Endothelial cell of umbilical vein (primary cell): ENCODE measurements at regions of chr17 and their contacts with region 1.

Region 1: GRCh38 chr17:8057691-8058114 is 18.8 kb downstream of the ALOX15B start:
- DNase-seq: peak; percentile 76
- H3K4me3 ChIP-seq: no peak overlapping the region
- H3K27ac ChIP-seq: no peak overlapping the region
- H3K4me1 ChIP-seq: peaks cover 16% of the 10 kb centered on the region
- H3K27me3 ChIP-seq: peaks cover 28 to 38% of the 10 kb centered on the region in 2 experiments
- CTCF ChIP-seq: peak; percentile 63 to 70
- POLR2A ChIP-seq: no peak

Region 2: DNA sequence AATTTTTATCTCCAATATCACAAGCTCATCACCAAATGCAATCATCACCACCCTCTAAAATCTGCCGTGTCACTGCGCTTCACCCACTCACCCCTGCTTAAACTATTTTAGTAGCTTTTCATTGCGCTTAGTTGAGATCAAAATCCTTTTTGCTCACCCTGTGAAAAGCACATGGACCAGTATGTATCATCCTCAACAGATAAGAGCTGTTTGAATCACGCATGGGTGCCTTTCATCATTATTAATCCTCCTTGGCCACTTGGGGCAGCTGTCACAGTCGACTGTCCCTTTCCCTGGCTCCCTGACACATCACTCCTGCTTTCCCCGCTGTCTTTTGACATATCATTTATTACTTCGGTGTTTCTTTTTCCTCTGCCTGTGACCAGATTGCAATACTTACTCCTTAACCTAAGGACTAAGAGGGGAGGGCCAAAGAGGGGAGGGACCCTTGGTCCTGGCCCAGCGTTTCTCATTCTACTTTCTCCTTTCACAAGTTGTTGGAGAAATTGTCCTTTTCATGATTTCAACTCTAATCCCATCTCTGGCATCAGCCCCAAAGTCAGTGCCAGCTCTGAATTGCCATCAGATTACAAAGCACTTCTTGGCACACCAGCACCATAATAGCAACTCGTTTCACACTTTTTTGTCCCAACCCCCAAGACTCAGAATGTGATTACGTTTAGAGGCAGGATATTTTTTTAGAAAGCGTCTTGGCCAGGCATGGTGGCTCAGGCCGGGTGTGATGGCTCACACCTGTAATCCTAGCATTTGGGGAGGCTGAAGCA is 232.3 kb before region 1 on chr17:
- CTCF ChIA-PET with region 1: interaction called, 5 read pairs
- POLR2A ChIA-PET with region 1: no interaction called
- dilution Hi-C with region 1: no loop called
- intact Hi-C with region 1: loop called (anchors 5 kb)
- DNase-seq: no peak
- H3K4me3 ChIP-seq: no peak overlapping the region
- H3K27ac ChIP-seq: no peak overlapping the region
- H3K4me1 ChIP-seq: no peaks in the 10 kb centered on the region
- H3K27me3 ChIP-seq: peaks cover 0 to 6% of the 10 kb centered on the region in 2 experiments
- CTCF ChIP-seq: peak in 1 of 2 donors; percentile 4
- POLR2A ChIP-seq: no peak

Region 3: DNA sequence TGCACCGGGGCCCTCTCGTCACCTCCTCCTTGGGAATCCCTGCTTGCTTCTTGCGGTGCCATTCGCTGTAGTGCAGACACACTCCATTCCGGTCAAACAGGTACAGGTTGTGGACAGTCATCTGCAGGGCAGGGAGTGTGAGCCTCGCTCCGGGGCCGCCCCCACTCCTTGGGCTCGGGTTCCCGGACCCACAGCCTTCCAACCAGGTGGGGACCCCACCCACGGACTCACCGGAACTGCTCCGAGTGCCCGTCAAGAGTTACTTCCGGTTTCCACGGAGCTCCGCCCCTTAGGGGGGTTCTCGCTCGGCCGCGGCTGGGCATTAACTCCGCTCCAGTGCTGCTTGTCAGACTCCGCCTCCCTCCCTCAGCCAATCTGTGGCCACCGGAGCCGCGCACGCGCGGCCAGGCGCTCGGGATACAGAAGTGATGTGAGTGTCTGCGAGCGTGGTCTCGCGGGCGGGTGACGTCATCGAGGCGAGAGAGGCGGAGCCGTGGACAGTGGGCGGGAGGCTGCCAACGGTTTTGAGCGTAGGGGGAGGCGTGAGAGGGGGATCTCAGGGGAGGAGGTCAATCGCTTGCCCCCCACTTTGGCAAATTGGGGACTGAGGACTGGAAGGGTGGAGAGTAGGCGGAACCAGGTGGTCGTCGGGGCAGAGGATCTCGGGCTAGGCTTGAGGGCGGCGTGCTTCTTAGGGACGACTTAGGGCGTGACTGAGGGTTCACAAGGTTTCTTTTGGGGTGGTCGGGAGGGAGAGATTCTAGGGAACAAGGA is 125.8 kb before region 1 on chr17 and contains the starts of genes CNTROB and TRAPPC1:
- CTCF ChIA-PET with region 1: interaction called, 13 read pairs
- POLR2A ChIA-PET with region 1: no interaction called
- dilution Hi-C with region 1: no loop called
- intact Hi-C with region 1: no loop called
- DNase-seq: peak; percentile 99
- H3K4me3 ChIP-seq: peak within 1 kb of the TSS; percentile 74 to 98 (median 96)
- H3K27ac ChIP-seq: peak within 1 kb of the TSS; percentile 66
- H3K4me1 ChIP-seq: peaks cover 23% of the 10 kb centered on the region
- H3K27me3 ChIP-seq: no peaks in the 10 kb centered on the region
- CTCF ChIP-seq: no peak
- POLR2A ChIP-seq: no peak
- total RNA-seq, gene CNTROB: 45.0 and 47.2 TPM in 2 replicates
- total RNA-seq, gene TRAPPC1: 139 and 146 TPM in 2 replicates

Region 4: DNA sequence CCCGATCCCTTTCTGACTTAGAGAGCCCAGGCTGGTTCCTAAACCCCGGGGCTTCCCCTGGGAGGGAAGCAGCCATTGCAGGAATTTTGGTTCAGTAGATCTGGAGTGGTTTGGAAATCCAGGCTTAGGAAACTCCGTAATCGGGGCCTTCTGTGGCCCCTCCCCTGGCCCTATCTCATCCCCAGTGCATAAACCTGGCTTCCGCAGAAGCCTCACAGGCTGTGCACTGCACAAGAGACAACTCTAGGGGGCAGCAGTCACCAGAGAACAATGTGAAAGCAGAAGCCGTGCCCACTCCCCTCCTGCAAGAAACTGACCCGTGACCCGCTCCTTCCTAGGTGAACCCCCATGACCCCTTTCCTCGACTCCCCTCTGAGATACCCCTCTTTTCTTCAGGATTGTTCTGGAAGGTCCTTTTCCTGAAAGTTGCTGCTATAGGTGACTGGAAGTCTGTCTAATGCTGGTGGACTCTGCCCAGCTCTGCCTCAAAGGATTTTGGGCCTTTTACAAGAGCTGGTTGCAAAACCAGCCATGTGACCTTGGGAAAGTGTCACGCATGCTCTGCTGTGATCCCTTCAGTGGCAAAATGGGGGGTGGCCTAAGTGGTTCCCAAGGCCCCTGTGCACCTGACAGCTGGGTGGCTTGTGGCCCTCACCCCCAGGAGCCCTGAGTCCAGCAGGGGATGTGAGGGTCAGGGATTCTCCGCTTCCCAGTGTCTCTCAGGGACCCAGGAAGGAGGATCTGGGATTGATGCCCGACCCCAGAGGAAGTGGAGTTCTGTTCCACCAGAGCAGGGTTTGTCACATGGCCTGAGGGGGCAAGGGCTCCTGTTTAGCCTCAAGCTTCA is 40.8 kb before region 1 on chr17:
- CTCF ChIA-PET with region 1: interaction called, 25 read pairs
- POLR2A ChIA-PET with region 1: no interaction called
- dilution Hi-C with region 1: no loop called
- intact Hi-C with region 1: loop called (anchors 2 kb)
- DNase-seq: peak; percentile 12
- H3K4me3 ChIP-seq: no peak overlapping the region
- H3K27ac ChIP-seq: no peak overlapping the region
- H3K4me1 ChIP-seq: no peaks in the 10 kb centered on the region
- H3K27me3 ChIP-seq: peaks cover 6 to 22% of the 10 kb centered on the region in 2 experiments
- CTCF ChIP-seq: peak; percentile 55 to 69
- POLR2A ChIP-seq: no peak

Region 5: GRCh38 chr17:8091033-8091687 is 33.5 kb after region 1 on chr17:
- CTCF ChIA-PET with region 1: interaction called, 53 read pairs
- POLR2A ChIA-PET with region 1: no interaction called
- dilution Hi-C with region 1: no loop called
- intact Hi-C with region 1: no loop called
- DNase-seq: no peak
- H3K4me3 ChIP-seq: no peak overlapping the region
- H3K27ac ChIP-seq: no peak overlapping the region
- H3K4me1 ChIP-seq: no peaks in the 10 kb centered on the region
- H3K27me3 ChIP-seq: peaks cover 2 to 12% of the 10 kb centered on the region in 2 experiments
- CTCF ChIP-seq: no peak
- POLR2A ChIP-seq: no peak

Region 6: DNA sequence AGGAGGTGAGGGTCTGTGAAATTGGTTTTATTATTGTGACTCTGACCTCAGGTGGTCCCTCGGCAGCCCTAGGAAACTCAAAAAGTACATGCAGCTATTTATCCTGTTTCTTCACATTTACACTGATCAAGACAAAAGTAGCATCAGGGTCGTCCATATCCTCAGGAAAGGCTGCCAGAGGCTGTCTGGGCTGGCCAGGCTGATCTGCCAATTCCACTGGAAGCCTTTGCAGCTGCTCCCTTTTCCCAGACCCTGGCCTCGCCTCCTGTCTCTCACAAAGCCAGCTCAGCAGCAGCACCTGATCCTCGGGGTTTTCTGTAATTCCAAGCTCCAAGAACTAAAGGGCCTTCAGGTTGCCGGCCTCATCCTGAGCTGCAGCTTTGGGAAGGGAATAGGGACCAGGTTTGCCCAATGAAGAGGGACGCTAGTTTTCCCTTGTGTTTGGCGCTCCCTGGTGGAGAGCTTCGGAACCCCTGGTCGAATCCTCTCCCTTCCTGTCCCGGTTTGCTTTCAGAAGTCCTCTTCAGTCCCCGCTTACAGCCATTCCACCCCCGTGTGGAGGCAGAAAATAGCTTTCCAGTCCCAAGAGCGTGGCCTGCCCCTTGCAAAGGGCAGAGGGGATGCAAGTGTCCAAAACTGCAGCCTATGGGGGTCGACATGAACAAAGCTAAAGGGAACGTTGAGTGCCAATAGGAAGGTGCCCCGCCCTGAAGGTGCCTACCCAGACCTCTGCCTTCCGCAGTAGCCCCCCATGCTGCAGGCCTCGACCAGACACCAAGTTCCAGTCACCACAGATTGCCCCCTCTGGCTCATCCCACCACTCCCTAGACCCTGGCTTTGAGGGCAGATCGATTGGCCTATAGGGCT is 728.1 kb after region 1 on chr17:
- CTCF ChIA-PET with region 1: interaction called, 11 read pairs
- POLR2A ChIA-PET with region 1: no interaction called
- dilution Hi-C with region 1: no loop called
- intact Hi-C with region 1: no loop called
- DNase-seq: peak; percentile 70
- H3K4me3 ChIP-seq: no peak overlapping the region
- H3K27ac ChIP-seq: no peak overlapping the region
- H3K4me1 ChIP-seq: no peaks in the 10 kb centered on the region
- H3K27me3 ChIP-seq: no peaks in the 10 kb centered on the region
- CTCF ChIP-seq: peak; percentile 81 to 90
- POLR2A ChIP-seq: no peak